ENCODE measurements at regions of chr3 and their contacts with region 1.

Region 1: GRCh38 chr3:16516695-16517481 is 3.4 kb upstream of the RFTN1 start:
- DNase-seq: peak; percentile 51 to 76 (median 69)
- H3K4me3 ChIP-seq: no peak overlapping the region
- H3K27ac ChIP-seq: no peak overlapping the region
- H3K4me1 ChIP-seq: peaks cover 9% of the 10 kb centered on the region
- H3K27me3 ChIP-seq: no peaks in the 10 kb centered on the region
- CTCF ChIP-seq: peak; percentile 37 to 54 (median 53)
- EP300 ChIP-seq: no peak
- POLR2A ChIP-seq: no peak

Region 2: GRCh38 chr3:16264708-16265454 is 252.0 kb before region 1 on chr3 and contains the starts of genes DPH3 and OXNAD1:
- intact Hi-C with region 1: loop called in 1 of 4 experiments (anchors 5 kb)
- DNase-seq: peak; percentile 100
- H3K4me3 ChIP-seq: peak within 1 kb of the TSS; percentile 73
- H3K27ac ChIP-seq: peak within 1 kb of the TSS; percentile 59 to 78
- H3K4me1 ChIP-seq: peaks cover 3% of the 10 kb centered on the region
- H3K27me3 ChIP-seq: no peaks in the 10 kb centered on the region
- CTCF ChIP-seq: peak in 2 of 3 donors; percentile 35 to 43
- EP300 ChIP-seq: no peak
- POLR2A ChIP-seq: peak; percentile 68
- total RNA-seq, gene DPH3: 10.8 to 28.3 (median 15.5) TPM
- total RNA-seq, gene OXNAD1: 7.9 to 16.3 (median 12.4) TPM

Region 3: DNA sequence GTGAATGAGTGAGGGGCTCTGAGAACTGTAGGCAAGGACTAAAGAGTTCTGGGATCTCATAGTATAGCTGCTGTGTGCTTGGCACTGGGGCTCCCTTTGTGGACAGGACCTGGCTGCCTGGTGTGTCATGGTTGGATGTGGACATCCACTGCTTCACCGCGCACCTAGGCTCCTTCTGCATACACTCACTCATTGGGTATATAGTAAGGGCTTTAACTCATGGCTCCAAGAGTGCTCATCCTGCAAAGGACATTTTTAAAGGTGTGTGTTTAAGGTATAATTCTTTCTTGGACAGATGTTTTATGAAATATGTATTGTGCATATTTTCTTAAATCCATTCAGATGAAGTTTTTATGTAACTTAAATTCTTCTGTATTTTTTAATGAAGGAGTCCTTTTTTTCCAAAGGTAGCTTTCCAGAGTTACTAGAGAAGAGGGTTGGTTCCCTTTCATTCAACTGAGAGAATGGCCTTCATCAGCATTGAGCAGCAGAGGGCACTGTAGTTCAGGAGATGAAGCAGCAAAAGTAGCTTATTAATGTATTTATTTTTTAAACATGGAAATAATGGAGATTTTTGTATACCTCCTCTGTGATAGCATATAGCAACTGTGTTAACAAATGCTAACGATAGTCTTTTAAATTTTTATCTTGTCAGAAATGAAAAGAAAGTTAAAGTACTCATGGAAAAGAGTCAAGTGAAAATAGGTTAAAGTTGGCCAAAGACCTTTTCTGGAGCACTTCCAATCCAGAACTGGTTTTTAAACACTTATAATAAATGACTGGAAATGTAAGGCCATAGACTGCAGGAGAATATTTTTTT is 226.7 kb before region 1 on chr3:
- intact Hi-C with region 1: loop called (anchors 5 to 10 kb)
- DNase-seq: peak in 4 of 5 donors; percentile 36 to 70 (median 52)
- H3K4me3 ChIP-seq: no peak overlapping the region
- H3K27ac ChIP-seq: no peak overlapping the region
- H3K4me1 ChIP-seq: peaks cover 2% of the 10 kb centered on the region
- H3K27me3 ChIP-seq: no peaks in the 10 kb centered on the region
- CTCF ChIP-seq: peak; percentile 69 to 85 (median 79)
- EP300 ChIP-seq: no peak
- POLR2A ChIP-seq: no peak

Measured in ovary (tissue), 10 donors.